Transverse colon (tissue), 4 donors: ENCODE measurements at regions of chr1 and their contacts with region 1.

Region 1: GRCh38 chr1:28091043-28091781 is 2.8 kb upstream of the EYA3 start:
- DNase-seq: peak; percentile 88
- H3K4me3 ChIP-seq: no peak overlapping the region
- H3K27ac ChIP-seq: peak overlapping the region in 2 of 4 donors; percentile 19 to 24
- H3K4me1 ChIP-seq: peaks cover 6 to 27% (median 21%) of the 10 kb centered on the region in 4 donors
- H3K27me3 ChIP-seq: no peaks in the 10 kb centered on the region
- CTCF ChIP-seq: peak; percentile 71 to 88 (median 80)
- EP300 ChIP-seq: no peak
- POLR2A ChIP-seq: no peak

Region 2: GRCh38 chr1:28199328-28200233 is 108.4 kb after region 1 on chr1:
- in situ Hi-C with region 1: loop called in 1 of 4 experiments (anchors 10 kb)
- intact Hi-C with region 1: no loop called
- DNase-seq: peak; percentile 57
- H3K4me3 ChIP-seq: no peak overlapping the region
- H3K27ac ChIP-seq: peak overlapping the region; percentile 2 to 32 (median 10)
- H3K4me1 ChIP-seq: peaks cover 3 to 13% (median 7%) of the 10 kb centered on the region in 4 donors
- H3K27me3 ChIP-seq: no peaks in the 10 kb centered on the region
- CTCF ChIP-seq: peak in 1 of 5 experiments; percentile 13
- EP300 ChIP-seq: no peak
- POLR2A ChIP-seq: no peak

Region 3: GRCh38 chr1:28208818-28209441 is 117.7 kb after region 1 on chr1:
- in situ Hi-C with region 1: loop called in 2 of 4 experiments (anchors 5 kb)
- intact Hi-C with region 1: no loop called
- DNase-seq: peak; percentile 73
- H3K4me3 ChIP-seq: no peak overlapping the region
- H3K27ac ChIP-seq: no peak overlapping the region
- H3K4me1 ChIP-seq: peaks cover 0 to 5% (median 0%) of the 10 kb centered on the region in 4 donors
- H3K27me3 ChIP-seq: no peaks in the 10 kb centered on the region
- CTCF ChIP-seq: peak; percentile 55 to 68 (median 60)
- EP300 ChIP-seq: no peak
- POLR2A ChIP-seq: no peak

Region 4: DNA sequence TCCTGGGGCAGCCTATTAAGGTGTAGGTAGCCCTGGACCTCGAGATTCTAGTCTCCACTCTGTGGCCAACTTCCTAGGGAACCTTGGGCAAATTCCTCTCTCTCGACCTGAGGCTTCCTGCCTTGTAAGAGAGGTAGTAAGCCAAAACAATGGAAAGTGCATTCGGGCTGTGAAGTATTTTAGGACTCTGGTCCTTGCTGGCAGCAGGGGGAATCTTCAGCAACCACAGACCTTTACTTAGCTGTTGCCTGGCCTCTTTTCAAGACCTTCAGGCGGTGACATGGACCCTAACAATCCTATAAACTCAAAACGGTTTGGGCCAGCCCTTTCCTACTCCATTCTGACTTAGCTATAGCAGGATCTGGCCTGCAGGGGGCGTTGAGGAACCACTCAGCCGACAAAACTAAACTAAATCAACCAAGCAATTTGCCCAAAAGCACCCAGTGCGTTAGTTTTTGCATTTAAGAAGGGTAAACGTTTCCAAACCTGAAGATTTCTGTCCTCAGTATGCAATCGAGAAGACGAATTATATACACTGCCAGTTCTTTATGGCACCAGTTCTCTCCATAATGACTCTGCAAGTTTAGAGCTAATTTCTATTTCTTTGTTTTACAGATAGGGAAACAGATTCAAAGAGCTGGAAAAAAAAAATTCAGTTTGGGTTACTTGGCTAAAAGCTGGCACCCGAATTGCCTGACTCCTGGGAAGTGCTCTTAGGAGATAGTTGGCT is 157.2 kb after region 1 on chr1:
- in situ Hi-C with region 1: no loop called
- intact Hi-C with region 1: no loop called
- DNase-seq: peak; percentile 89
- H3K4me3 ChIP-seq: peak overlapping the region in 2 of 4 donors; percentile 3 to 9
- H3K27ac ChIP-seq: peak overlapping the region; percentile 89 to 95 (median 91)
- H3K4me1 ChIP-seq: peaks cover 25 to 65% (median 39%) of the 10 kb centered on the region in 4 donors
- H3K27me3 ChIP-seq: no peaks in the 10 kb centered on the region
- CTCF ChIP-seq: peak; percentile 90 to 95 (median 93)
- EP300 ChIP-seq: no peak
- POLR2A ChIP-seq: no peak